Caco-2 (cell line): ENCODE measurements at regions of chr5 and their contacts with region 1.

Region 1: DNA sequence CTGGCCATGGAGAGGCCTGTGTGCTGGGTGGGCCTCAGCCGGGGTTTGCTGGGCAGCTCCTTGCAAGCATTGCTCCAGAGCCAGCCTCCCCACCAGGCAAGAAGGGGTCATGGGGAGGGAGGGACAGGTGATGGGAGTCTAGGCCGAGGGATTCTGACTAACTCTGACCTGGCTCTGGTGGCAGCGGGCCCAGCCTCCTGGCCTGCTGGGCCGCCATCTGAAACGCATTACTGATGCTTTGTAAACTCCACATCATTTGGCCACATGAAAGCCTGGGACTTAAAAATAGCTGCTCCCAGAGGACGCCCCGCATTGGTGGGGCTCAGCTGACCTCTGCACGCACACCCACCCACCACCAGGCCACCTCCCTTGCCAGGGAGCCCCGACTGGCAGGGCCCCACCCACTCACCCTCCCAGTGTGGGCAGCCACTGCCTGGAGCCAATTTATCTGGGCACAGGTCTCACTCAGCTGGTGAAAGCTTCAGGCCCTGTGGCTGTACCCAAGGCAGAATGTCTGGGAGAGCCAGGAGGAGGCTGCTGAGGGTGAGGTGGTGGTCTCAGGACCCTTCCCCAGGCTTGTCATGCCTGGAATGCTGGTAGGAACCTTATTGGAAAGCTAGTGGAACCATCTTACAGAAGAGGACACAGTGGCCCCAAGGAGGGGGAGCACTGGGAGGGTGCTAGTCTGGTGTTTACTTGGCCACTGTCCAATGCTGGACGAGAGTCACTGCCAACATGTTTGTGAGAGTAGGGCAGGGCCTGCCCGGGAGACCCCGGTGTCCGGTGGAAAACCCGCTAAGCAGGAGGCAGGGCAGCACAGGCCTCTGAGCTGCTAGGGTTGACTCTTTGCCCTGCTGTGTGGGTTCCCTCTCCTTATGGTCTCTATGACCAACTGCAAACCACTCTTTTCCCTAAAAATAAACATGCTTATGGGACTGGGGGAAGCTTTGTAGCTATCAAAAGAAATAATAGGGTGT is 10.8 kb downstream of the TCF7 start:
- DNase-seq: no peak
- H3K4me3 ChIP-seq: no peak overlapping the region
- H3K4me3 Mint-ChIP-seq: no peak overlapping the region
- H3K27ac Mint-ChIP-seq: no peak overlapping the region
- H3K4me1 ChIP-seq: no peaks in the 10 kb centered on the region
- H3K4me1 Mint-ChIP-seq: no peaks in the 10 kb centered on the region
- H3K27me3 ChIP-seq: no peaks in the 10 kb centered on the region
- H3K27me3 Mint-ChIP-seq: no peaks in the 10 kb centered on the region
- CTCF ChIP-seq: no peak

Region 2: DNA sequence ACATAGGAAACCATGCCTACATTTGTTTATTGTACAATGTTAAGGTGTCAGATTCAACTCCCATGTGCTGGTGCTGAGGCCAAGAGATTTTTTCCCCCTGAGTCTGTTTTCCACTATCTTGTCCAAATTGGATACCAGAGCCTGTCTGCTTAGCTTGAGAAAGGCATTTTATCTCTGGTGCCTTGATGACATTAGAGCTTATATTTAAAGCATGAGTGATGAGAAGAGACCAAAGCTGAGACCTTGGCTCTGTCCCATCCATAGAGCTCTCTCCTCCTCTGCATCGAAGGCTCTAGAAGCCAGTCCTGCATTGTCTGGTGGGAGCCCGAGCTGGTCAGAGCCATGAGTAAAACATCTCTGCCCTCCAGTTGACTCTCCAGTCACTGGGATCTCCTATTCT is 111.0 kb after region 1 on chr5:
- CTCF ChIA-PET with region 1: no interaction called
- POLR2A ChIA-PET with region 1: no interaction called
- intact Hi-C with region 1: no loop called
- DNase-seq: no peak
- H3K4me3 ChIP-seq: no peak overlapping the region
- H3K4me3 Mint-ChIP-seq: no peak overlapping the region
- H3K27ac Mint-ChIP-seq: no peak overlapping the region
- H3K4me1 ChIP-seq: peaks cover 14% of the 10 kb centered on the region
- H3K4me1 Mint-ChIP-seq: peaks cover 8% of the 10 kb centered on the region
- H3K27me3 ChIP-seq: no peaks in the 10 kb centered on the region
- H3K27me3 Mint-ChIP-seq: no peaks in the 10 kb centered on the region
- CTCF ChIP-seq: no peak

Region 3: GRCh38 chr5:135343413-135343812 is 1218.1 kb after region 1 on chr5:
- CTCF ChIA-PET with region 1: no interaction called
- POLR2A ChIA-PET with region 1: interaction called, 11 read pairs
- intact Hi-C with region 1: no loop called
- DNase-seq: no peak
- H3K4me3 ChIP-seq: no peak overlapping the region
- H3K4me3 Mint-ChIP-seq: no peak overlapping the region
- H3K27ac Mint-ChIP-seq: no peak overlapping the region
- H3K4me1 ChIP-seq: peaks cover 21% of the 10 kb centered on the region
- H3K4me1 Mint-ChIP-seq: no peaks in the 10 kb centered on the region
- H3K27me3 ChIP-seq: no peaks in the 10 kb centered on the region
- H3K27me3 Mint-ChIP-seq: no peaks in the 10 kb centered on the region
- CTCF ChIP-seq: no peak